Activated CD4-positive, alpha-beta T cell treated with anti-CD3 and anti-CD28 coated beads for 36 hours (primary cell): ENCODE measurements at regions of chr10 and their contacts with region 1.

Region 1: GRCh38 chr10:12966067-12966667 is 35.3 kb downstream of the CCDC3 start:
- DNase-seq: peak; percentile 8
- ATAC-seq: peak; percentile 95
- H3K4me3 Mint-ChIP-seq: no peak overlapping the region
- H3K27ac Mint-ChIP-seq: no peak overlapping the region
- H3K4me1 Mint-ChIP-seq: no peaks in the 10 kb centered on the region
- H3K27me3 Mint-ChIP-seq: peaks cover 17% of the 10 kb centered on the region

Region 2: GRCh38 chr10:12921163-12921562 is 45.0 kb before region 1 on chr10:
- CTCF ChIA-PET with region 1: no interaction called
- POLR2A ChIA-PET with region 1: no interaction called
- intact Hi-C with region 1: loop called in 1 of 2 experiments (anchors 1 kb)
- DNase-seq: no peak
- ATAC-seq: no peak
- H3K4me3 Mint-ChIP-seq: no peak overlapping the region
- H3K27ac Mint-ChIP-seq: no peak overlapping the region
- H3K4me1 Mint-ChIP-seq: no peaks in the 10 kb centered on the region
- H3K27me3 Mint-ChIP-seq: peaks cover 5% of the 10 kb centered on the region